Sigmoid colon (tissue), 7 donors: ENCODE measurements at regions of chr6 and their contacts with region 1.

Region 1: DNA sequence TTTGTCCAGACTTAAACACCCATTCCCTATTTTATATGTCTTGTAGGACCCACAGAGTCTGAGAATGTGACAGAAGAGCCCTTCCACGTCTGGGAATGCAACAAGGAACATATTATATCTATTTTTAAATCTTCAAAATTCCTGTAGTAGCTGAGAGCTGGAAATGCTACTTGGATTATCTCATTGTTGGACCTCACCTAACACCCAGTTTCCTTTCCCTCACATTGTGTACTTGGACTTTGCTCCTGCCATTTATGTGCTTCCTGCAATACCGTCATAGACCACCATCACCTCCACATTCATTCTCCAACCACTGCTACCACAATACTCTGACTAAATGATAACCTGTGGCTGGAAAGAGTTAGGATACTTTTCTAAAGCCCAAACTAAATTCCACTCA is 335.4 kb downstream of the COL12A1 start:
- DNase-seq: no peak
- H3K4me3 ChIP-seq: no peak overlapping the region
- H3K27ac ChIP-seq: peak overlapping the region in 1 of 4 donors; percentile 17
- H3K4me1 ChIP-seq: peaks cover 0 to 19% (median 14%) of the 10 kb centered on the region in 4 donors
- H3K27me3 ChIP-seq: no peaks in the 10 kb centered on the region
- CTCF ChIP-seq: peak in 1 of 4 experiments; percentile 8
- EP300 ChIP-seq: no peak
- POLR2A ChIP-seq: no peak

Region 2: DNA sequence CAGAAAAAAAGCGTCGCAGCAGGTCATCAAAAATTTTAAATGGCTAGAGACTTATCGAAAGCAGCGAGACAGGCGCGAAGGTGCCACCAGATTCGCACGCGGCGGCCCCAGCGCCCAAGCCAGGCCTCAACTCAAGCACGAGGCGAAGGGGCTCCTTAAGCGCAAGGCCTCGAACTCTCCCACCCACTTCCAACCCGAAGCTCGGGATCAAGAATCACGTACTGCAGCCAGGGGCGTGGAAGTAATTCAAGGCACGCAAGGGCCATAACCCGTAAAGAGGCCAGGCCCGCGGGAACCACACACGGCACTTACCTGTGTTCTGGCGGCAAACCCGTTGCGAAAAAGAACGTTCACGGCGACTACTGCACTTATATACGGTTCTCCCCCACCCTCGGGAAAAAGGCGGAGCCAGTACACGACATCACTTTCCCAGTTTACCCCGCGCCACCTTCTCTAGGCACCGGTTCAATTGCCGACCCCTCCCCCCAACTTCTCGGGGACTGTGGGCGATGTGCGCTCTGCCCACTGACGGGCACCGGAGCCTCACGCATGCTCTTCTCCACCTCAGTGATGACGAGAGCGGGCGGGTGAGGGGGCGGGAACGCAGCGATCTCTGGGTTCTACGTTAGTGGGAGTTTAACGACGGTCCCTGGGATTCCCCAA is 1349.6 kb before region 1 on chr6 and contains the start of gene EEF1A1:
- intact Hi-C with region 1: no loop called
- DNase-seq: peak; percentile 99
- H3K4me3 ChIP-seq: peak within 1 kb of the TSS; percentile 80 to 85 (median 82)
- H3K27ac ChIP-seq: peak within 1 kb of the TSS; percentile 92 to 100 (median 100)
- H3K4me1 ChIP-seq: peaks cover 0 to 60% (median 55%) of the 10 kb centered on the region in 4 donors
- H3K27me3 ChIP-seq: no peaks in the 10 kb centered on the region
- CTCF ChIP-seq: no peak
- EP300 ChIP-seq: peak; percentile 50 to 96 (median 68)
- POLR2A ChIP-seq: peak; percentile 100
- total RNA-seq, gene EEF1A1: 10,846 to 15,452 (median 12,894) TPM

Region 3: GRCh38 chr6:74840953-74841352 is 29.4 kb before region 1 on chr6:
- intact Hi-C with region 1: no loop called
- DNase-seq: no peak
- H3K4me3 ChIP-seq: no peak overlapping the region
- H3K27ac ChIP-seq: no peak overlapping the region
- H3K4me1 ChIP-seq: no peaks in the 10 kb centered on the region
- H3K27me3 ChIP-seq: no peaks in the 10 kb centered on the region
- CTCF ChIP-seq: no peak
- EP300 ChIP-seq: no peak
- POLR2A ChIP-seq: no peak

Region 4: DNA sequence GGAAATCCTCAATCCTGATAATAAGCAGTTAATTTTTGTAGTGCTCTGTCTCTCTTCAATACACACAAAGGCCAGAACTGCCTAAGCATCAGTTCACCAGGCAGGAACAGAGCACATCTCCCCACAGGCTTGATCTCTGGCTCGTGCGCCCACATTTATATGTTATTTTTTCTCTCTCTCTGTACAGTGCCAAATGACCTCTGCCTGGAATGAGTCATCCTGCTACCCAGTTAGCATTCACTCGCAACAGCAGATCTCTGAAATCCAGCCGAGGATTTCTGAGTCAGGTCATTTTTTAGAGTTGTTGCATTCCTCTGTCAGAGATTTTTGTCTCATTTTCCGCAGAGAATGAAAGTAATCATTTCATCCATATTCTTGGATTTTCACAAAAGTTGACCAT is 228.3 kb after region 1 on chr6:
- intact Hi-C with region 1: loop called (anchors 10 kb)
- DNase-seq: peak; percentile 91
- H3K4me3 ChIP-seq: no peak overlapping the region
- H3K27ac ChIP-seq: peak overlapping the region; percentile 67 to 82 (median 81)
- H3K4me1 ChIP-seq: peaks cover 0 to 44% (median 29%) of the 10 kb centered on the region in 4 donors
- H3K27me3 ChIP-seq: no peaks in the 10 kb centered on the region
- CTCF ChIP-seq: no peak
- EP300 ChIP-seq: no peak
- POLR2A ChIP-seq: no peak